Activated CD4-positive, alpha-beta memory T cell treated with anti-CD3 and anti-CD28 coated beads for 36 hours (primary cell): ENCODE measurements at regions of chr2 and their contacts with region 1.

Region 1: GRCh38 chr2:26043862-26044696 is 10.2 kb downstream of the RAB10 start:
- DNase-seq: peak; percentile 24
- H3K4me3 Mint-ChIP-seq: peak overlapping the region; percentile 24
- H3K27ac Mint-ChIP-seq: no peak overlapping the region
- H3K4me1 Mint-ChIP-seq: peaks cover 59% of the 10 kb centered on the region
- H3K27me3 Mint-ChIP-seq: no peaks in the 10 kb centered on the region

Region 2: GRCh38 chr2:26068602-26069298 is 24.7 kb after region 1 on chr2:
- CTCF ChIA-PET with region 1: interaction called, 3 read pairs
- POLR2A ChIA-PET with region 1: interaction called, 5 read pairs
- intact Hi-C with region 1: loop called (anchors 2 kb)
- DNase-seq: peak; percentile 76
- H3K4me3 Mint-ChIP-seq: peak overlapping the region; percentile 69
- H3K27ac Mint-ChIP-seq: peak overlapping the region; percentile 96
- H3K4me1 Mint-ChIP-seq: peaks cover 57% of the 10 kb centered on the region
- H3K27me3 Mint-ChIP-seq: no peaks in the 10 kb centered on the region